ENCODE measurements at regions of chr12 and their contacts with region 1.

Region 1: GRCh38 chr12:82685790-82686167 is 927 bp upstream of the TMTC2 start:
- DNase-seq: peak; percentile 88 to 90
- H3K4me3 ChIP-seq: peak overlapping the region; percentile 62
- H3K27ac ChIP-seq: peak overlapping the region; percentile 92
- H3K4me1 ChIP-seq: peaks cover 33% of the 10 kb centered on the region
- H3K27me3 ChIP-seq: no peaks in the 10 kb centered on the region
- CTCF ChIP-seq: peak; percentile 93

Region 2: GRCh38 chr12:82383930-82384552 is 301.7 kb before region 1 on chr12:
- CTCF ChIA-PET with region 1: no interaction called
- POLR2A ChIA-PET with region 1: no interaction called
- intact Hi-C with region 1: loop called (anchors 1 kb)
- DNase-seq: no peak
- H3K4me3 ChIP-seq: no peak overlapping the region
- H3K27ac ChIP-seq: no peak overlapping the region
- H3K4me1 ChIP-seq: no peaks in the 10 kb centered on the region
- H3K27me3 ChIP-seq: no peaks in the 10 kb centered on the region
- CTCF ChIP-seq: peak; percentile 65

Region 3: DNA sequence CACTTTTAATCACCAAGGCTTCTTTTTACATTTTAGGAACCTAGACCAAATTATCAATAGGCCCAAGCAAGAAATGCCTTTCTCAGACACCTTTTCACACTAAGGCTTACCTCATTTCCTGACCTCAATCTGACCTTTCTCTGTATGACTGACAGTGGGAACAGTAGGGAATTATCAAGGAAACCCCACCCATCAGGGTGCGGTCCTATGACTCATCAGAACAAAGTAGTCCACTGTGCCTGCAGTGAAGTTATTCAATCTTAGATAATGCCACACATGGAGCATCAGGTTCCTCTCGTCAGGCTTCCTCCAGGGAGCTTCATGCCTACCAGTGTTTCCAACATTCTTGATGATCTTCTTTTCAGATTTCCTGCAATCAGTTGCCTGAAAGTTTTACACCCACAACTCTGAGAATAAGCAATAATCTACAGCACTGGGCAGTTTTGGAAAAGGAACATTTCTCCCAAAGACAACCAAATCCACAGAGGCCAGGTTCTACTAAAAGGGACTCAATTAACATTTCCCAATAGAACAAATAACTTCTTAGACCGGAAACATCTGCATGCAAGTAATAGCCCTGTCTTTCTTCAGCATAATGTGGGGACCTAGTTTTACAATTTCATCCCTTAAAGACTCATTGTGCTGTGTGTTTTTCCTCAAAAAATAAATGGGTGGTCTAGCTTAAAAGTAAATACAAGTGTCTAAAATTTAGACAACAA is 35.0 kb before region 1 on chr12:
- CTCF ChIA-PET with region 1: interaction called, 7 read pairs
- POLR2A ChIA-PET with region 1: no interaction called
- intact Hi-C with region 1: loop called (anchors 1 kb)
- DNase-seq: peak; percentile 81 to 95
- H3K4me3 ChIP-seq: no peak overlapping the region
- H3K27ac ChIP-seq: peak overlapping the region; percentile 87
- H3K4me1 ChIP-seq: peaks cover 26% of the 10 kb centered on the region
- H3K27me3 ChIP-seq: no peaks in the 10 kb centered on the region
- CTCF ChIP-seq: no peak

Region 4: GRCh38 chr12:83573671-83574070 is 887.9 kb after region 1 on chr12:
- CTCF ChIA-PET with region 1: no interaction called
- POLR2A ChIA-PET with region 1: no interaction called
- intact Hi-C with region 1: loop called (anchors 5 kb)
- DNase-seq: peak; percentile 44 to 59
- H3K4me3 ChIP-seq: no peak overlapping the region
- H3K27ac ChIP-seq: no peak overlapping the region
- H3K4me1 ChIP-seq: peaks cover 9% of the 10 kb centered on the region; the same call in 1 of the 2 replicates
- H3K27me3 ChIP-seq: no peaks in the 10 kb centered on the region
- CTCF ChIP-seq: no peak

Region 5: GRCh38 chr12:84502907-84503787 is 1817.4 kb after region 1 on chr12:
- CTCF ChIA-PET with region 1: interaction called, 3 read pairs
- POLR2A ChIA-PET with region 1: no interaction called
- intact Hi-C with region 1: loop called (anchors 2 kb)
- DNase-seq: peak in 1 of 2 experiments; percentile 41
- H3K4me3 ChIP-seq: no peak overlapping the region
- H3K27ac ChIP-seq: no peak overlapping the region
- H3K4me1 ChIP-seq: peaks cover 7% of the 10 kb centered on the region
- H3K27me3 ChIP-seq: no peaks in the 10 kb centered on the region
- CTCF ChIP-seq: peak; percentile 62